Cardiac septum (tissue), 1 donor: ENCODE measurements at regions of chr19 and their contacts with region 1.

Region 1: DNA sequence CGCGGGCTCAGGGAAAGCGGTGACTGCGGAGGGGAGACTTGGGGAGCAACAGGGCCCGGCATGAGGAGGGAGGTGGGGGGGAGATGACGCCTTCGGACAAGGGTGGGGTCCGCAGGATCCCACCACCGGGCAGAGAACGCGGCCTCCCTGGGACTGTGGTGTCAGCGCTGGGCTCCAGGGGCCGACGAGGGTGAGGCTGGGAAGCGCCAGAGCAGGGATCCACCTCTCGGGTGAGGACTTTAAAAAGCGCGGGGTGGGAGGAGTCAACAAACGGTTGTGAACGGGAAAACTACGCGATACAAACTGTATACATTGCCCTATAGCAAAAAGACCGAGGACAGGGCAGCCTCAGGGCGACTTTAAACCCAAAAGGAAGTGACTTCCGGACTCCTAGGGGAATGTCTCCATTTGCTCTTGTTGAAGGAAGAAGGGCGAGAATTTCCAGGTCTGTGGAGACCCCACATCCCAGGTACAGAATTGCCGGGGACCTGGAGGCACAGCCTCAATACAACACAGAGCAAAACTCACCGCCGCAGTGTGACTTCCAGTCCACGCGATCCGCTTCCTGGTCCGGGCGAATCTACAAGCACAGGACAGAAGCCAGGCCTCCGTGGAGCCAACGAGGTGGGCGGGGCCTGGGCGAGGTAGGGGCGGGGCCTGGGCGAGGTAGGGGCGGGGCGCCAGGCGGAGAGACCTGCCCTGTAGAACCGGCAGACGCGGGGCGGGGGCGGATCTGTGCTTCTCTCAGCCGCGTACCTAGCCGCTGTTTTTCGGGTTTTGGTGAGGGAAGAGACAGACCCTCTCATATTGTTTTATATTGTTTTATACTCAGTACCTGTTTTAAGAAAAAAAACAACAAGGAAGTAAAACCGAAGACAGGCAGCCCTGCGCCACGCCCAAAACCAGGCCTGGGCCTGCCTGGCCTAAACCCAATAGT is at the start of gene ZNF888:
- DNase-seq: peak; percentile 96
- total RNA-seq, gene ZNF888: 1.3 TPM

Region 2: DNA sequence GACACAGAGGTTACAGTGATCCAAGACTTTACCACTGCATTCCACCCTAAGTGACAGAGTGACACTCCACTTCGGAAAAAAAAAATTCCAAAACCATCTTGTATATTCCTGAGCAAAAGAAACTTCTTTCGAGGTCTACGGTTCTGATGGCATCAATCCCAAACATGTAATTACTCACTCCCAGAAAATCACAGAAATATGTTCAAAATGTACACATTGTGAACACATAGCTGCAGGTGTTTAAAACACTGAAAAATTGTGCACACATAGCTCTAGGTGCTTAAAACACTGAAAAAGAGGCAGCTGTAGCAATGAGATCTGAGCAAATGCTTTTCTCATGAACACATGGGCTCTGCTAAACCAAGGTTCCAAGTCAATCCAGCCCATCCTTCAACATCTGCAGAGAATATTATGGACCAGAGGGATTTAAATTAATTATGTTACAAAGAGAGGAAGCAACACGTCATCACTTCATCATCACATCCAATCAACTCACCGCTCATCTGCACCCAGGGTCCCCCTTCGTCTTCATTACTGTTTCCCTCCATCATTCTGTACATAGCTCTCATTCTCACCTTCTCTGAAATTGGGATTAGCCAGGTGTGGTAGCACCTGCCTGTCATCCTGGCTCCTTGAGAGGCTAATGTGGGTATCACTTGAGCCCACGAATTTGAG is 51.5 kb before region 1 on chr19:
- intact Hi-C with region 1: no loop called
- DNase-seq: no peak

Region 3: GRCh38 chr19:52942386-52943133 is 19.5 kb after region 1 on chr19:
- intact Hi-C with region 1: loop called (anchors 2 kb)
- DNase-seq: peak; percentile 96